PC-9 (cell line): ENCODE measurements at regions of chr10 and their contacts with region 1.

Region 1: GRCh38 chr10:28663576-28664313 is 13.6 kb upstream of the BAMBI start:
- DNase-seq: peak; percentile 63 to 72
- H3K4me3 ChIP-seq: no peak overlapping the region
- H3K27ac ChIP-seq: no peak overlapping the region
- H3K4me1 ChIP-seq: no peaks in the 10 kb centered on the region; the same call in 1 of the 2 replicates
- H3K27me3 ChIP-seq: no peaks in the 10 kb centered on the region
- CTCF ChIP-seq: peak; percentile 87

Region 2: GRCh38 chr10:28628184-28628893 is 35.4 kb before region 1 on chr10:
- CTCF ChIA-PET with region 1: interaction called, 4 read pairs
- POLR2A ChIA-PET with region 1: no interaction called
- intact Hi-C with region 1: loop called (anchors 5 kb)
- DNase-seq: peak; percentile 51 to 74
- H3K4me3 ChIP-seq: no peak overlapping the region
- H3K27ac ChIP-seq: no peak overlapping the region
- H3K4me1 ChIP-seq: peaks cover 7% of the 10 kb centered on the region; the same call in 1 of the 2 replicates
- H3K27me3 ChIP-seq: no peaks in the 10 kb centered on the region
- CTCF ChIP-seq: peak; percentile 91

Region 3: GRCh38 chr10:29131952-29132820 is 468.4 kb after region 1 on chr10:
- CTCF ChIA-PET with region 1: interaction called, 3 read pairs
- POLR2A ChIA-PET with region 1: no interaction called
- intact Hi-C with region 1: loop called (anchors 1 kb)
- DNase-seq: no peak
- H3K4me3 ChIP-seq: no peak overlapping the region
- H3K27ac ChIP-seq: no peak overlapping the region
- H3K4me1 ChIP-seq: no peaks in the 10 kb centered on the region
- H3K27me3 ChIP-seq: no peaks in the 10 kb centered on the region
- CTCF ChIP-seq: no peak

Region 4: GRCh38 chr10:29141063-29141462 is 477.3 kb after region 1 on chr10:
- CTCF ChIA-PET with region 1: interaction called, 3 read pairs
- POLR2A ChIA-PET with region 1: no interaction called
- intact Hi-C with region 1: loop called (anchors 5 kb)
- DNase-seq: peak; percentile 40 to 74
- H3K4me3 ChIP-seq: no peak overlapping the region
- H3K27ac ChIP-seq: peak overlapping the region; percentile 32
- H3K4me1 ChIP-seq: peaks cover 19% of the 10 kb centered on the region
- H3K27me3 ChIP-seq: no peaks in the 10 kb centered on the region
- CTCF ChIP-seq: no peak

Region 5: GRCh38 chr10:29239569-29240472 is 576.1 kb after region 1 on chr10:
- CTCF ChIA-PET with region 1: no interaction called
- POLR2A ChIA-PET with region 1: no interaction called
- intact Hi-C with region 1: loop called (anchors 5 kb)
- DNase-seq: no peak
- H3K4me3 ChIP-seq: no peak overlapping the region
- H3K27ac ChIP-seq: no peak overlapping the region
- H3K4me1 ChIP-seq: no peaks in the 10 kb centered on the region
- H3K27me3 ChIP-seq: no peaks in the 10 kb centered on the region
- CTCF ChIP-seq: peak; percentile 49

Region 6: DNA sequence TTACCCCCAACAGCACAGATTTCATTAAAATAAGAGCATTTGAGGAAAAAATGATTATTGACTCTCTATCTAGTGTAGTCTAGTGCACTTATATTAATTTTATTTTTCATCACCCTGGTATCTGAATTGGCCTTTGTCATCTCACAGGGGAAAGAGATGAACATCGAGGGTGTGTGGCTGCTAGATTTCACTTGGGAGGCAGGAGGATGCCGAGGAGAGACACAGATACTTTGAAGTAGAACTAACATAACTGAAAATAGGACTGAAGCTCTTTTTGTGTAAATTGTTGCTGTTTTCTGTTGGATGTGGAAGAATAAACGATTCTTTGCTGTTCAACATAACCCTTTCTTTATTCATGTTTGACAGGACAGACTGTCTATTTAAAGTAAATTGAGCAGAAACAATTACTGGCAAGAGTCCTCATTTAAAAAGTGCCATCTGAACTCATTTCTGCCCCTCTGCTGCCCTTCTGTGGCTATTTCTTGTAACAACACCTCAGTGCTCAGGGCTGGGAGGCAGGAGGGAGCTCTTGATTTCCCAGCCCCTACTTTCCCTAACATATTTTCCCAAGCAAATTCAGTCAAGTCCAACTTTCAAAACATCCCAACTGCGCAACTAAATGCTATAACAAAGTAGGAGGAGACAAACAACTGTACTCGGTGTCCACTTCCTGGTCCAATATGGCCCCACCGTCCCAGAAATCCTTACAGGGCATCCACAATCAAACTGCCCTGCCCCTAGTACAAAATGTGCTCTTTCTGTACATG is 640.7 kb after region 1 on chr10:
- CTCF ChIA-PET with region 1: interaction called, 17 read pairs
- POLR2A ChIA-PET with region 1: no interaction called
- intact Hi-C with region 1: loop called (anchors 1 kb)
- DNase-seq: peak; percentile 44 to 64
- H3K4me3 ChIP-seq: no peak overlapping the region
- H3K27ac ChIP-seq: no peak overlapping the region
- H3K4me1 ChIP-seq: 0 out of 2 replicates have a peak, but pooled peaks cover 4% of the 10 kb centered on the region
- H3K27me3 ChIP-seq: no peaks in the 10 kb centered on the region
- CTCF ChIP-seq: peak; percentile 78

Region 7: GRCh38 chr10:29377333-29377961 is 713.7 kb after region 1 on chr10:
- CTCF ChIA-PET with region 1: no interaction called
- POLR2A ChIA-PET with region 1: no interaction called
- intact Hi-C with region 1: loop called (anchors 5 kb)
- DNase-seq: no peak
- H3K4me3 ChIP-seq: no peak overlapping the region
- H3K27ac ChIP-seq: no peak overlapping the region
- H3K4me1 ChIP-seq: no peaks in the 10 kb centered on the region
- H3K27me3 ChIP-seq: no peaks in the 10 kb centered on the region
- CTCF ChIP-seq: peak; percentile 69